ENCODE measurements at regions of chr15 and their contacts with region 1.

Region 1: GRCh38 chr15:72783563-72784237 is at the start of gene ADPGK:
- DNase-seq: peak; percentile 80 to 96 (median 88)
- H3K4me3 ChIP-seq: peak within 1 kb of the TSS; percentile 63 to 100 (median 98)
- H3K27ac ChIP-seq: peak within 1 kb of the TSS; percentile 76 to 99 (median 96)
- H3K27me3 ChIP-seq: no peaks in the 10 kb centered on the region
- CTCF ChIP-seq: peak in 25 of 56 donors; percentile 3 to 51 (median 29)
- total RNA-seq, gene ADPGK: 18.9 to 53.0 (median 30.7) TPM

Region 2: GRCh38 chr15:72375847-72376581 is 407.7 kb before region 1 on chr15 and contains the start of gene HEXA:
- intact Hi-C with region 1: loop called in 1 of 2 experiments (anchors 10 kb)
- DNase-seq: peak; percentile 88 to 96 (median 94)
- H3K4me3 ChIP-seq: peak within 1 kb of the TSS; percentile 69 to 100 (median 96)
- H3K27ac ChIP-seq: peak within 1 kb of the TSS; percentile 49 to 98 (median 90)
- H3K27me3 ChIP-seq: no peaks in the 10 kb centered on the region
- CTCF ChIP-seq: peak in 30 of 56 donors; percentile 6 to 47 (median 30)
- total RNA-seq, gene HEXA: 59.4 to 109 (median 80.2) TPM

Region 3: DNA sequence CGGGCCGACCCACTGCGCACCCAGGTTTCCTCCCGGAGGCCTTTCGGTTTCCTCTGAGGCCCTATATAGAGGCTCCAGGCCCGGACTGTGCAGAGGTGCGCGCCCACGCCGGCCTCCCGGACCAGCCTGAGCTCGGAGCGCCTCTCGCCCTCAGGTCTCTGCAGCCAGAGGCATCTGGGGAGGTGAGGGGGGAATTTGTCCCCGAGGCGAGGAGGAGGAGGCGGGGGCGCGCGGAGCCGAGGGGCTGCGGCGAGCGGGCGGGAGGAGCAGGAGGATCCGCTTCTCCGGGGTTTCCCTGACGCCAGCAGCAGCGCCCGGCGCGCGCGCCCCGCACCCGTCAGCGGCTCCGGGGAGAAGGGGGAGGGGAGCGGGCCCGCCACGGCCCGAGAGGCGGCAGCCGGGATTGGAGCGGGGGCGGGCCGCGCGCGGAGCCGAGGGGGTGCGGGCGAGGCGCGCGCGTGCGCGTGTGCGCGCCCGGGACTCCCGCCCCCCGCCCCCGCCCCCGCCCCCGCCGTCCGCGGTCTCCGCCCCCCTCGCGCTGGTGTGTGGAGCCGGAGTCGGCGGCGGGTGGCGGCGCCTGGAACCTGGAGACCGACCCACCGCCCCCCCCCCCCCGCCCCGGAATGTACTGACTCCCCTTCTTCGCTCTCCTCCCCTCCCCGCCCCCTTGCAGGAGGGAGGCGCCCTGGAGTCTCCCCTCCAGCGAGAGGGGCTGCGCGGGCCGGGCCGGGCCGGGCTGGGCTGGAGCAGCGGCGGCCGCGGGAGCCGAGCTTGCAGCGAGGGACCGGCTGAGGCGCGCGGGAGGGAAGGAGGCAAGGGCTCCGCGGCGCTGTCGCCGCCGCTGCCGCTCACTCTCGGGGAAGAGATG is 268.3 kb after region 1 on chr15 and contains the start of gene NEO1:
- intact Hi-C with region 1: loop called (anchors 2 to 5 kb)
- DNase-seq: peak; percentile 77 to 93 (median 87)
- H3K4me3 ChIP-seq: peak within 1 kb of the TSS; percentile 71 to 92 (median 80)
- H3K27ac ChIP-seq: peak within 1 kb of the TSS; percentile 80 to 100 (median 99)
- H3K27me3 ChIP-seq: no peaks in the 10 kb centered on the region
- CTCF ChIP-seq: peak in 1 of 56 donors; percentile 26
- total RNA-seq, gene NEO1: 53.3 to 164 (median 83.2) TPM

Region 4: DNA sequence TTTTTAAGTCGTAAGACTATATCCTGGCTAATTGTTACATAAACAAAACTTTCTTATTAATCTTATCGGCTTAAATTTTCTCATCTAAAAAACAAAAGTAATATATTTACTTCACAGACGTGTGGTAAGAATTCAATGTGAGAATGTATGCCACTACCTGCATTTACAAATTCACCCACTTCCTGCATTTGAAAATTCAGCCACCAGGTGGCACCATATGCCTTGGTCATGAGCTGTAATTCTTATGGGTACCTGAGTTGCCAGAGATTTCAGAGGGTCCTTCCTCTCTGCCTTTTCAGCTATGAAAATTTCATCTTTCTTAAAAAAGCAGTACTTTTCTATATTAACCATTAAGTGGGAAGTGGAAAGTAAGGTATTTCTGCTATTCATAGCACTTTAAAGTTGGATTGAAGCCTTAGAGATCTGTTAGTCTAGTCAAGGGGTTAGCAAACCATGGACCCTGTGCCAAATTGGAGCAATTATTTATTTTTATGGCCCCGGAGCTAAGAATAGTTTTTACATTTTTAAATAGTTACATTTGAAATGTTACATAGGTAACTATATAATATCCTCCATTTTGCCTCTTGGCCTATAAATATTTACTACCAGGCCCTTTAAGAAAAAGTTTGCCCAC is 457.3 kb after region 1 on chr15:
- intact Hi-C with region 1: loop called in 1 of 2 experiments (anchors 2 kb)
- DNase-seq: peak in 8 of 10 donors; percentile 42 to 89 (median 65)
- H3K4me3 ChIP-seq: no peak overlapping the region
- H3K27ac ChIP-seq: peak overlapping the region in 1 of 59 donors; percentile 20
- H3K27me3 ChIP-seq: no peaks in the 10 kb centered on the region
- CTCF ChIP-seq: peak; percentile 81 to 98 (median 91)

Region 5: GRCh38 chr15:73633111-73633990 is 849.7 kb after region 1 on chr15 and contains the start of gene NPTN:
- intact Hi-C with region 1: loop called in 1 of 2 experiments (anchors 10 kb)
- DNase-seq: peak; percentile 96 to 100 (median 99)
- H3K4me3 ChIP-seq: peak within 1 kb of the TSS; percentile 37 to 99 (median 92)
- H3K27ac ChIP-seq: peak within 1 kb of the TSS; percentile 62 to 97 (median 92)
- H3K27me3 ChIP-seq: no peaks in the 10 kb centered on the region
- CTCF ChIP-seq: peak in 49 of 56 donors; percentile 4 to 67 (median 35)
- total RNA-seq, gene NPTN: 126 to 515 (median 369) TPM

Measured in dorsolateral prefrontal cortex (tissue), 120 donors.